Activated CD4-positive, alpha-beta memory T cell treated with anti-CD3 and anti-CD28 coated beads for 36 hours (primary cell): ENCODE measurements at regions of chr6 and their contacts with region 1.

Region 1: DNA sequence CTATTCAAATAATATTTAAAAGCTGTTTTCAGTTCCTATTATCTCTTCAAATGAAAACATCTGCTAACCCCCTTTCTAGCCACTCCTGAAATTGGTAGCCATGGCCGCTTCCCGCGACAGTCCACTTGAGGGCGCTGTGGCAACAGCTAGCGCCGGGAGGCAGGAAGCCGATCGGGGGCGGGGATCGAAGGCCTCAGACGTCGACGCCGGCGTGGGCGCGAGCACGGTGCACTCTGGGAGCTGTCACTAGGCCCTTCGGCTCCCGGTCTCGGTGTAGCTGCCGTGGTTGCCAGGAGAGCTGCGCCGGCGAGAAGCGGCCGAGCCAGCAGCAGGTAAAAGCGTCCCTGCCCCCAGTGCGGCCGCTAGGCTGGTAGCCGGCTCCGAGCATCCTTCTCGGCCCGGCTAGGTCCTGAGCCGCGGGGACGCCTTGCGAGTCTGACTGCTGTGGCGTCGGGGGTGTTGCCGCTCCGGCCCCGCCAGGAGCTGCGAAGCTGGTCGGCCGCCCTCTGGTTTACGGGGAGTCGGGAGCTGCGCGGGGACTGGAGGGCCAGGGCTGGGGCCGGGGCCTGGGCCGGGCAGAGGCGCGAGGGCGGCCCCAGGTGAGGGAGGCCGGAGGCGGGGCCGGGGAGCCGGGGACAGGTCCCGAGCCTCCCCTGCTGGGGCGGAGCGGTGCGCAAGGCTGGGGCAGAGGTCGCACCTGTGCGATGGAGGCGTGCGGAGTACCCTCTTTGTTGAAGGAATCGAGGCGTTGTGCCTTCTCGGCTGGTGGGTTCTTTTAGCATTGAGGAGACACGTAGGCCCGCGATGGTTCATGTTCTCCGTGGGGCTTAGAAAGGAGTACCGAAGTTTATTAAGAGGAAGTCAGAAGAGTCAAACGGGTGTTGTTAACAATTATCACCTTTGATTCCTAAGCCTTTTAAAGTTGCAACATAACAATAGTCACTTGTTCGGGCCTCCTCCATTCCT is at the start of gene DOP1A:
- DNase-seq: peak; percentile 98
- H3K4me3 Mint-ChIP-seq: peak within 1 kb of the TSS; percentile 88
- H3K27ac Mint-ChIP-seq: peak within 1 kb of the TSS; percentile 79
- H3K4me1 Mint-ChIP-seq: peaks cover 42% of the 10 kb centered on the region
- H3K27me3 Mint-ChIP-seq: no peaks in the 10 kb centered on the region
- total RNA-seq, gene DOP1A: 5.9 to 8.8 TPM

Region 2: GRCh38 chr6:82247634-82248232 is 820.0 kb before region 1 on chr6 and contains the start of gene IBTK:
- CTCF ChIA-PET with region 1: interaction called, 30 read pairs
- POLR2A ChIA-PET with region 1: interaction called, 3 read pairs
- intact Hi-C with region 1: loop called (anchors 1 kb)
- DNase-seq: peak; percentile 95
- H3K4me3 Mint-ChIP-seq: peak within 1 kb of the TSS; percentile 89
- H3K27ac Mint-ChIP-seq: peak within 1 kb of the TSS; percentile 90
- H3K4me1 Mint-ChIP-seq: peaks cover 27% of the 10 kb centered on the region
- H3K27me3 Mint-ChIP-seq: no peaks in the 10 kb centered on the region
- total RNA-seq, gene IBTK: 30.7 to 32.1 TPM

Region 3: DNA sequence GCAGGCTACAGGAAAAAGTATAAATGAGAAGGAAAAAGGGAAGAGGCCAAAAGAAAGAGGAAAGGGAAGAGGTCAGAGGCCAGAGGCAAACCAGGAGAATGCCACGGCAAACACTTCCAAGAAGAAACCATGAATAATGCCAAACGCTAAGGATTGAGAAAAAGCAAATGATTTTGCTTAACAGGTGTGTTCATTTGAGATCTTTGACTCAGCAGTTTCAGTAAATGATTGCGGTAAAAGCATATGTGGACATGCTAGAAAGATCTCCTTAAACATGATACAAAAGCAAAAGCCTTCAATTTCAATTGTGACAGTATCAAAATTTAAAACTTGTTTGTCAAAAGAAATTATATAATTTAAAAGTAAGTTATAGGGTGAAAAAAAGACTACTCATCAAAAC is 72.7 kb before region 1 on chr6:
- CTCF ChIA-PET with region 1: no interaction called
- POLR2A ChIA-PET with region 1: no interaction called
- intact Hi-C with region 1: no loop called
- DNase-seq: no peak
- H3K4me3 Mint-ChIP-seq: no peak overlapping the region
- H3K27ac Mint-ChIP-seq: no peak overlapping the region
- H3K4me1 Mint-ChIP-seq: no peaks in the 10 kb centered on the region
- H3K27me3 Mint-ChIP-seq: no peaks in the 10 kb centered on the region

Region 4: DNA sequence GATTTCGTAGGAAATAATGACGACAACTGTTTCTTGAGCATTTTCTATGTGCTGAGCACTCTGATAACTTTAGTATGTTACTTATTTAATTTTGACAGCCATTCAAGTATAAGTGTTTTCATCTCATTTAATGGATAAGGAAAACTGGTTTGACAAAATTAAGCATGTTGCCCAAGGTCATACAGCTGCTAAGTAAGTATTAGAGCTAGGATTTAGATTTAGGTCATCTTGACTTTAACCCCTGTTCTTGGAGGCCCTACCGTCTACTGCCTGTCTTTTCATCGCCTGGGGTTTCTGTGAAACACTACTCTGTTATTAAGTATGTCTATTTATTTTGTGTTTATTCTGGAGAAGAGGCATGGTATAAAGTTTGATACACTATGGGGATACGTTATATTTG is 22.4 kb after region 1 on chr6:
- CTCF ChIA-PET with region 1: interaction called, 17 read pairs
- POLR2A ChIA-PET with region 1: interaction called, 3 read pairs
- intact Hi-C with region 1: no loop called
- DNase-seq: no peak
- H3K4me3 Mint-ChIP-seq: no peak overlapping the region
- H3K27ac Mint-ChIP-seq: no peak overlapping the region
- H3K4me1 Mint-ChIP-seq: peaks cover 17% of the 10 kb centered on the region
- H3K27me3 Mint-ChIP-seq: no peaks in the 10 kb centered on the region

Region 5: GRCh38 chr6:83169511-83169910 is 101.8 kb after region 1 on chr6:
- CTCF ChIA-PET with region 1: interaction called, 14 read pairs
- POLR2A ChIA-PET with region 1: no interaction called
- intact Hi-C with region 1: no loop called
- DNase-seq: no peak
- H3K4me3 Mint-ChIP-seq: no peak overlapping the region
- H3K27ac Mint-ChIP-seq: no peak overlapping the region
- H3K4me1 Mint-ChIP-seq: no peaks in the 10 kb centered on the region
- H3K27me3 Mint-ChIP-seq: no peaks in the 10 kb centered on the region

Region 6: DNA sequence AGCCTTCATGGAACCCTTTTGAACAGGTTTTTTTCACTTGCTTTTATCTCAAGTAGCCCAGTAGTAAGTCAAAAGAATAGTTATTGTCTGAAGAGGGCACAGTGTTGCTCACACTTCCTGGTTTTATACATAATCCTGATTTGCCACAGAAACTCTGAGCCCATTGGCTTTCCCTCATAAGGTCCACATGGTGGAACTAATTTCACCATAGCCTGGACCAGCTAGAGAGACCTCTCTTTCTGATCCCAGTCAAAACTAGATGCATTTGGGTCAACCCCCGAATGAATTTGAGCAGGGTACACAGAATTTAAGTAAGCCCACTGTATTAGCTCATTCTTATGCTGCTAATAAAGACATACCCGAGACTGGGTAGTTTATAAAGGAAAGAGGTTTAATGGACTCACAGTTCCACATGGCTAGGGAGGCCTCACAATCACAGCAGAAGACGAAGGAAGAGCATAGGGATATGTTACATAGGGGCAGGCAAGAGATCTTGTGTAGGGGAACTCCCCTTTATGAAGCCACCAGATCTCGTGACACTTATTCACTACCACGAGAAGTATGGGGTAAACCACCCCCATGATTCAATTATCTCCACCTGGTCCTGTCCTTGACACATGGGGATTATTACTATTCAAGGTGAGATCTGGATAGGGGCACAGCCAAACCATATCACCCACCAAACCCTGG is 131.6 kb after region 1 on chr6:
- CTCF ChIA-PET with region 1: interaction called, 31 read pairs
- POLR2A ChIA-PET with region 1: no interaction called
- intact Hi-C with region 1: no loop called
- DNase-seq: no peak
- H3K4me3 Mint-ChIP-seq: no peak overlapping the region
- H3K27ac Mint-ChIP-seq: no peak overlapping the region
- H3K4me1 Mint-ChIP-seq: peaks cover 10% of the 10 kb centered on the region
- H3K27me3 Mint-ChIP-seq: no peaks in the 10 kb centered on the region

Region 7: GRCh38 chr6:83514866-83515466 is 447.2 kb after region 1 on chr6:
- CTCF ChIA-PET with region 1: interaction called, 69 read pairs
- POLR2A ChIA-PET with region 1: no interaction called
- intact Hi-C with region 1: loop called (anchors 2 kb)
- DNase-seq: peak; percentile 10
- H3K4me3 Mint-ChIP-seq: no peak overlapping the region
- H3K27ac Mint-ChIP-seq: no peak overlapping the region
- H3K4me1 Mint-ChIP-seq: peaks cover 5% of the 10 kb centered on the region
- H3K27me3 Mint-ChIP-seq: peaks cover 27% of the 10 kb centered on the region

Region 8: DNA sequence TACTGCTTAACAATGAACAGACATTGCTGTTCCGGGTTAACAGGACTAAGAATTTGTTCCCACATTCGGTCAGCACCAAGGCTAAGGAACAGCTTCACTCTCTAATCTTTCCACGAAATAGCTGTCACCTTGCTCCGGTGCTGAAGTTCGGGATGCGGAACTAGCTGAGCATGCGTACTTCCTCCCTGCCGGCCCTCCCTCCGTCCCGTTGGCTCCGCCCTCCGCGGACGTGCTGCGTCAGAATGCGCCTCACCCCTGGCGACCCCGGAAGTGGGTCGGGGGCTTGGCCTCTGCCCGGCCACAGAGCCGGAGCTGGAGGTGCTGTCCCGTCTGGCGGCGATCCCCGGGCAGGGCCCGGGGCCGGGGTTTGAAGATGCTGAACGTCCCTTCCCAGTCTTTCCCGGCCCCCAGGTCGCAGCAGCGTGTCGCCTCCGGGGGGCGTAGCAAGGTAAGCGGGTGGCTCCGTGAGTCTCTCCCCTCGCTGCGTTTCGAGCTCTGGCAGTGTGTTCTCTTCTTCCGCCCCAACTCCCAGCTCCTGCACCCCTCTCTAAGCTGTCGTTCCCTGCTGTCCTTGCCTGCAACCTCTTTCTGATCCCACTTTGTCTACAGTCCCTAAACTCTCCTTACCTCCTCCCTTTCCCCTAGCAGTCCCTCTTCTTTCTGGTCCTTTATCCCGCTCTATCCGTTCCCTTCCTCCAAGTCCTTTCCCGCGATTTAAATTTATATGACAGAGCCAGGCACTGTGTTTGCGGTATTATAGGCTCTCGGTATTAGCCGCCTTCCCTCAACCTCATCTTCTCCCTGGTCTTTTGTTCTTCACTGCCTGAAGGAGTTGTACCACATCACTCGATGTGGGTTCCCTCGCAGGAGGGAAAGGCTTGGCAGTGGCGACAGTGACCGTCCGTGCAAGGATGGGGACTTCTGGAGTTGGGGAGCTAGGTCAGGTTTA is 792.0 kb after region 1 on chr6 and contains the start of gene CYB5R4:
- CTCF ChIA-PET with region 1: interaction called, 5 read pairs
- POLR2A ChIA-PET with region 1: no interaction called
- intact Hi-C with region 1: loop called (anchors 5 kb)
- DNase-seq: peak; percentile 97
- H3K4me3 Mint-ChIP-seq: peak within 1 kb of the TSS; percentile 99
- H3K27ac Mint-ChIP-seq: peak within 1 kb of the TSS; percentile 87
- H3K4me1 Mint-ChIP-seq: peaks cover 30% of the 10 kb centered on the region
- H3K27me3 Mint-ChIP-seq: peaks cover 12% of the 10 kb centered on the region
- total RNA-seq, gene CYB5R4: 26.2 to 29.8 TPM